ENCODE measurements at regions of chr19 and their contacts with region 1.

Region 1: DNA sequence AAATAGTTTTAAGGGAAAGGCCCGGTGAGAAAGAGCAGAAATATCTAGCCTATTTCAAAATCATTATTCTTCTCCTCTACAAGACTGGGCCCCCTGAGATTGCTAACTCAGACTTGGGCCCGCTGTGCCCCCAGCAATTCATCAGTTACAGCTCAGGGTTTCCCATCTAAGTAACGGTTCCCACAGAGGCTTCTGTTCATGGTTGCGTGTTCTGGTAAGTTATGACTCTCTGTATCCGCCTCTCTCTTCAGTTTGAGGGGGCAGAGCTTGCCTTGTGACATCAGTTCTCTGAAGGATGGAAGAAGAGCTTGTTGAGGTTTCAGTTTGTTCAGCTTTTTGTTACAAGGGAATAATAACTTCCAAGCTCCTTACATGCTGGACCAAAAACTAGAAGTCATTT is 11.6 kb downstream of the ZNF57 start:
- DNase-seq: no peak
- H3K4me3 Mint-ChIP-seq: no peak overlapping the region
- H3K27ac Mint-ChIP-seq: no peak overlapping the region
- H3K4me1 Mint-ChIP-seq: peaks cover 13% of the 10 kb centered on the region
- H3K27me3 Mint-ChIP-seq: no peaks in the 10 kb centered on the region
- CTCF ChIP-seq: no peak

Region 2: DNA sequence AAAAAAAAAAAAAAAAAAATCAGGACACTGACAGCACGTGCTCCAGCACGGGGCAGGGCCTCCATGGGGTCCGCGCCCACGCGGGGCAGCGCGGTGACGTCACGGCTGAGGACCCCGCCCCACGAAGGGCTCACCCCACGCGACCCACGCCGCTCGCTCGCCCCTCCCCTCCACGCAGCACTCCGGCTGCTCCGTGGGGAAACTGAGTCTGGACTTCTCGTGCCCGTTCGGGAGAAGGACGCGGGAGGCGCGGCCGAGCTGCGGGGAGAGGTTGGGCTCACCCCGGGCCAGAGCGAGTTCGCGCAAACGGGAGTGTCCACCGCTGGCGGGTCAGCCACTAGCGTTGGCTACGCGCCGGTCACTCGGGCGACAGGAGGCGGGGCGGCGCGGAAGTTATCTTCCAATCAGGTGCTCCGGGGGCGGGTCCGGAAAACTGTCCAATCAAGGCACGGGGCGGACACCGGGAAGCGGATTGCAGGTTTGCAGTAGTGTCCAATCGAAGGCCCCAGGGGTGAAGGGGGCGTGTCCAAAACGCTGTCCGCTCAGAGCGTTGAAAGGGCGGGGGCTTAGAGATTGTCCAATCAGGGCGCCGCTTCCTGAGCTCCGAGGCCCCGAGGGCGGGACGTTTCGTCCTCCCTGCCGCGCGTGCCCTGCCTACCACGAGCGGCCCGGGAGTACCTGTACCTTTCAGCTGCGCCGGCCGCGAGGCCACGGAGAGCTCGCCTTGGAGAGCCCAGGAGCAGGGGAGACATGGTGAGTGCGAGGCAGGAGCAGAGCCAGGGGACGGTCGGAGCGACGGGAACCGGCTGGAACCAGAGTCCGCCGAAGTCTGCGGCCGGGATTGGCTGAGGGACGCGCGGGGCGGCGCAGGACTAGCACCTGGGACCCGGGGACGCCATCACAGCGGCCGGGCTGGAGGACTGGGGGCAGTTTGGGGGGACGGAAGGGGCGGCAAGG is 11.7 kb before region 1 on chr19 and contains the start of gene ZNF57:
- CTCF ChIA-PET with region 1: no interaction called
- POLR2A ChIA-PET with region 1: interaction called, 20 read pairs
- intact Hi-C with region 1: no loop called
- DNase-seq: peak; percentile 100
- H3K4me3 Mint-ChIP-seq: peak within 1 kb of the TSS; percentile 94
- H3K27ac Mint-ChIP-seq: peak within 1 kb of the TSS; percentile 94
- H3K4me1 Mint-ChIP-seq: peaks cover 19% of the 10 kb centered on the region
- H3K27me3 Mint-ChIP-seq: no peaks in the 10 kb centered on the region
- CTCF ChIP-seq: no peak
- total RNA-seq, gene ZNF57: 4.8 and 5.5 TPM in 2 replicates

Region 3: DNA sequence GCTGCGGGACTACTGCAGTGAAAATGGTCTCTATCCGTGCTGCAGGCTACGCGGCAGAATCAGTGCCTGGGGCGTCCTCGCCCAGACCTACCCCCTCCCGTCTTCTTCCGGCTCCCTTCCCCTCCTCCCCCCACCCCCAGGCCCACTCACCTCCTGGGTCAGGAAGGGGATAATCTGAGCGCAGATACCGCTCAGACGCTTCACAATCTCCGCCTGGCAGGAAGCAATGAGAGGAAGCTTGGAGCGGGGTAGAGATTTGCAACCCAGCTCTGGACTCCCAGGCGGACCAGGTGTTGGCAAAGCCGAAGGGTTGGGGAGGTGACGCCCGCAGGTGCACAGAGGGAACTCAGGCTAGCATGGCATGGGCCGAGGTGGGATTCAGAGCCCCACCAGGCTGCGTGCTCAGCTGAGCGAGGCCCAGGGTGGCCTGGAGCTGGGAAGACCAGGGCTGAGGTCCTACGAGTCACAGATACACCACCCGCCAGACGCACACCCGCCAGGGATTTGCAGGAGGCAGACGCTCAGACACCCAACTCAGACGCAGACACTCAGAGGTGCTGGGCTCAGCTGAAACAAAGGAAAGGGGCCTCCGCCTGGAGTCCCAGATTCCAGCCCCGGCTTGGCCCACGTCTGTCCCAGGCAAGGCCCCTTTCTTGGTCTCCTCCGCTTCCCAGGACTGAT is 112.7 kb after region 1 on chr19:
- CTCF ChIA-PET with region 1: no interaction called
- POLR2A ChIA-PET with region 1: no interaction called
- intact Hi-C with region 1: no loop called
- DNase-seq: no peak
- H3K4me3 Mint-ChIP-seq: no peak overlapping the region
- H3K27ac Mint-ChIP-seq: no peak overlapping the region
- H3K4me1 Mint-ChIP-seq: no peaks in the 10 kb centered on the region
- H3K27me3 Mint-ChIP-seq: no peaks in the 10 kb centered on the region
- CTCF ChIP-seq: no peak

Region 4: DNA sequence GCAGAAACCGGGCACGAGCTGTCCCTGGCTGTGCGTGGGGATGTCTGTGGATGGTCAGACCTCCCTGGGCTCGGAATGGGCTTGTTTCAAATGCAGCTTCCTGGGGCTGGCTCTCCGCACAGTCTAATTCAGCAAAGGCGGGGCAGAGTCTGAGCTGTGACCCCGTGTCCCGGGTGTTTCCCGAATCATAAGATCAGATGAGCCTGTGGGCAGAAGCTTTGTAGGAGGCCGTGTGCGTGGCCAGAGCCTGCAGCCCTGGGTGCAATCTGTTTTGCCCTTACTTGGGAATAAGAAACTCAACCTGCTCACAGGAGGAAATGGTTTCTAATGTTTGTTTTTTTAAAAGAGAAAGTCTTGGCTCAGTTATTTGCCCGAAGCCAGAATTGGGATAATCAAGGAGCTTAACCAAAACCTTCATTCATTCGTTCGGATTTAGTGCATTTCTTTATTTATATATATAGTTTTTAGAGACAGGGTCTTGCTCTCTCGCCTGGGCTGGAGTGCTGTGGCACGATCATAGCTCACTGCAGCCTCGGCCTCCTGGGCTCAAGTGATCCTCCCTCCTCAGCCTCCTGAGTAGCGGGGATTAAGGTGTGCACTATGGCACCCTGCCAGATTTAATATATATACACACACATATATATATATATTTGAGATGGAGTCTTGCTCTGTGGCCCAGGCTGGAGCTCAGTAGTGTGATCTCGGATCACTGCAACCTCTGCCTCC is 168.2 kb after region 1 on chr19:
- CTCF ChIA-PET with region 1: no interaction called
- POLR2A ChIA-PET with region 1: no interaction called
- intact Hi-C with region 1: no loop called
- DNase-seq: no peak
- H3K4me3 Mint-ChIP-seq: no peak overlapping the region
- H3K27ac Mint-ChIP-seq: no peak overlapping the region
- H3K4me1 Mint-ChIP-seq: no peaks in the 10 kb centered on the region
- H3K27me3 Mint-ChIP-seq: no peaks in the 10 kb centered on the region
- CTCF ChIP-seq: no peak